ENCODE measurements at regions of chr5 and their contacts with region 1.

Region 1: DNA sequence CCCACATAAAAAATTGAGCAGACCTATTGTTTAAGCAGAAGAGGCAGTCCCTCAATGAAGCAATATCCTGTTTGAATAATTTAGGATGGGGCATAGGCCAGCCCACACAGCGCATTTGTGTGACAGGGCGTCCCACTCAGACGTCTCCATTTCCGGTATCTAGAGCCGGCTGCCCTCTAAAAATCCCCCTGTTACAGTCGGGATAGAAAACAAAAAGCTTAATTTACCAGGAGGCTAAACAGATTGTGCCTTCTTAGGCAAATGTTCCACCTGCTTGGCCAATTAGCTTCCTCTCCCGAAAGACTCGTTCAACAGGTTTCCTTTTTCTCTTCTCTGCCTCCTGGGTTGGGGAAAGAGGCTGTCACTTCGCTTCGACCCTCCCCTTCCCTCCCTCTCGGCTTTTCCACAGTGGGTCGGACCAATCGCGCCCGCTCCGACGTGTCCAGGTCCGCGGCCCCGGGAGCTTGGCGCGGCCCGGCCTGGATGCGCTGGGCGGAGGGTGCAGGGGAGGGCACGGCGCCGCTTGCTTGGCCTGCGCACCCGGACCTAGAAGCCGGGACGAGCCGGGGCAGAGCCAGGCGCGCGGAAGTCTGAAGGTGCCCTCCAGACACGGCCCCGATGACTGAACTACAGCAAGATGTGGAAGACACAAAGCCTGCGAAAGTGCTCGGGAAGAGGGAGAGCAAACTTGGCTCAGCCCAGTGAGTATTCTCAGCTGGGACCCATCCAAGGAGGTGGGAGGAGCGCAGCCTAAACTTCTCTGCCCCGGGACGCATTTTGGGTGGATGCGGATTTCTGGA is at the start of gene GRAMD2B:
- DNase-seq: peak; percentile 85 to 89 (median 87)
- H3K4me3 ChIP-seq: peak within 1 kb of the TSS; percentile 79
- H3K27ac ChIP-seq: peak within 1 kb of the TSS; percentile 70 to 87
- H3K4me1 ChIP-seq: peaks cover 1% of the 10 kb centered on the region
- H3K27me3 ChIP-seq: no peaks in the 10 kb centered on the region
- CTCF ChIP-seq: no peak
- EP300 ChIP-seq: no peak
- POLR2A ChIP-seq: peak; percentile 89
- total RNA-seq, gene GRAMD2B: 19.2 to 99.0 (median 32.2) TPM

Region 2: DNA sequence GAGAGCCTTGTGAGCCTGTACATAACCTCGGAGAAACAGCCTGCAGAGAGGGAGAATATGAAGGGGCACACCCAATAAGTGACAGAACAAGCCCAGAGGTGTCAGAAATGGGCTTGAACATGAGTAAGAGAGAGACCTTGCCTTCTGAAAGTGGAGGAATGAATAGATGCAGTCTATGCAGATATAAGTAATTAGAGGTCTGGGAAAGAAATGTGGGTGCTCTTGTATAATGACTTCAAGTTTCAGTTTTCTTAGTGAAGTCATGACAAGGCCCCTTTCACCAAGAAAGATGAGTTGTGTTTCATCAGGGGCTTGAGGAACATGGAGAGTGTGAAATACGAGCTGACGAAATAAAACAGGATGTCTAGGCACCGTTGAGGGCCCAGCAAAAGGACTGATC is 15.1 kb after region 1 on chr5:
- intact Hi-C with region 1: no loop called
- DNase-seq: no peak
- H3K4me3 ChIP-seq: no peak overlapping the region
- H3K27ac ChIP-seq: no peak overlapping the region
- H3K4me1 ChIP-seq: peaks cover 7% of the 10 kb centered on the region
- H3K27me3 ChIP-seq: no peaks in the 10 kb centered on the region
- CTCF ChIP-seq: no peak
- EP300 ChIP-seq: no peak
- POLR2A ChIP-seq: no peak

Region 3: DNA sequence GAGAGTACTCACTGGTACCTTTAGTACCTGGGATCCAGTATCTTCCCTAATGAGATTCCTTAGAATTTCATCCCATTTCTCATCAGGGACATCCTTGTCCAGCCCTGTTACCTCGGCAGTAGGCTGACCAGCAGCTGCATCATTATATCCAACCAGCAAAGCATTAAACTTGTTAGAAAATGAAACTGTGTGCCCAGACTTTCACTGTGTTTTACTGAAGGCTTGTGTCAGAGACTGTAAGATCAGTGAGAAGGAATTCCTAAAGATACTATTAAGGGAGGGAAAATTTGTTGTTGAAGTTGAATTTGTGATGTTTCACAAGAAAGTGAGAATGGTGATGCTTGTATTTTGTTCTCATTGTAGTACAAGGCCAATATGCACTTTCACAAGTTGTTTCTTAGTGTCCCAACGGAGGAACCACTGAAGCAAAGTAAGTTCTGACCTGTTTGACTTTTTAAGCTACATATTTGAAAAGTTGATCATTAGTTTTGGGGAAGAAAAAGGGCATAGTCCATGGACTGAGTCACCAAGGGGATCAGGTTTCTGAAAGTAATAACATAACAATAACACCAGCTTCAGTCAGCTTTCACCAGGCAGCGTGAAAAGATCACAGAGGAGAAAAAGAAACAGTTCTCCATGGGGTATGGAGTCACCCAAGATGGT is 48.8 kb after region 1 on chr5:
- intact Hi-C with region 1: loop called in 2 of 4 experiments (anchors 10 kb)
- DNase-seq: no peak
- H3K4me3 ChIP-seq: no peak overlapping the region
- H3K27ac ChIP-seq: peak overlapping the region; percentile 16 to 21
- H3K4me1 ChIP-seq: peaks cover 21% of the 10 kb centered on the region
- H3K27me3 ChIP-seq: no peaks in the 10 kb centered on the region
- CTCF ChIP-seq: no peak
- EP300 ChIP-seq: no peak
- POLR2A ChIP-seq: no peak

Region 4: DNA sequence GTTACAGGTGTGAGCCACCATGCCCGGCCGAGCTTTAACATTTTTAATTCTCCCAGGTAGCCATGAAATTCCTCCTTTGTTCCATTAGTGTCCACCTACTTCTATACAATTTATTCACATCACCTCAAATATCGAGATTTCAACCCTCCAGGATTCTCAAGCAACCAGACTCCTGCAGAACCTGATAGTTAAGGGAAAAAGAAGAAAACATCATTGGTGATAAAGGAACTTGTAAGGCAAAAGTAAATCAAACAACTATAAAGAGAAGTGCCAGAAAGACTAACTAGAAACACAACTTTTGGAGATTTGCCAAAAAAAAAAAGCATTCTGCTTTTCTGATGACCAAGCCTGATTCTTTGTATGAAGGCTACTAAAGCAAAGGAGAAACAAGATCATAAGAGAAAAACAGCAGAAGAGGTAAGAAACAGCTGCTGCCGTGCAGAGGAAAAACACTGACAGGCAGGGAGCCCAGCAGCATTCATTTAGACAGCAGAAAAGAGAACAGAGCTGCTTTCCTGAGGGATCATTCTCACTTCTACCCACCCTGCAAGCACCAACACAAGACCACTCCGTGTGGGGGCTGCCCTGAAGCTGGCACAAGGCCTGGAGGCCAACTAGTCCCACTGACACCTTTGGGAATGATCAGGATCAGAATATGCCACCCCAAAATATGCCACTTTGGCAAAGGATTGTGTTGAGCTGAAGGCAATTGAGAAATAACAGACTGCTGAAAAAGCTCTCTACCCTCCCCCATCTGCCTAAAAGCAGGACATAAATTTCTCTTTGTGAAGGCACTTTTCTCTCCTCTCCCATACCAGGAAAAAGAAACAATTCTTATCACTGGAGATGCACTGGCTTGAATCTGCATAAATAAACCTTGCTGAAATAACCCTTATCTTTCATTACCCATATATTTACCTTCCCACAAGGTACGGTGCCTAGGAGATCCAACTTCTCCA is 96.7 kb after region 1 on chr5:
- intact Hi-C with region 1: loop called in 1 of 4 experiments (anchors 5 kb)
- DNase-seq: peak; percentile 70 to 74 (median 73)
- H3K4me3 ChIP-seq: no peak overlapping the region
- H3K27ac ChIP-seq: peak overlapping the region; percentile 75 to 91
- H3K4me1 ChIP-seq: peaks cover 29% of the 10 kb centered on the region
- H3K27me3 ChIP-seq: no peaks in the 10 kb centered on the region
- CTCF ChIP-seq: no peak
- EP300 ChIP-seq: no peak
- POLR2A ChIP-seq: peak; percentile 13